Activated T-helper 1 cell treated with anti-CD3 and anti-CD28 coated beads, Interleukin-12 subunit alpha, Interleukin-12 subunit beta, Interleukin-2, Interleukin-4 antibody, amounts not matched to agents 30 ng/mL and 10 ng/mL and 1 ng/mL, durations not matched to agents 14 hours and 24 hours and 36 hours (primary cell): ENCODE measurements at regions of chr13 and their contacts with region 1.

Region 1: DNA sequence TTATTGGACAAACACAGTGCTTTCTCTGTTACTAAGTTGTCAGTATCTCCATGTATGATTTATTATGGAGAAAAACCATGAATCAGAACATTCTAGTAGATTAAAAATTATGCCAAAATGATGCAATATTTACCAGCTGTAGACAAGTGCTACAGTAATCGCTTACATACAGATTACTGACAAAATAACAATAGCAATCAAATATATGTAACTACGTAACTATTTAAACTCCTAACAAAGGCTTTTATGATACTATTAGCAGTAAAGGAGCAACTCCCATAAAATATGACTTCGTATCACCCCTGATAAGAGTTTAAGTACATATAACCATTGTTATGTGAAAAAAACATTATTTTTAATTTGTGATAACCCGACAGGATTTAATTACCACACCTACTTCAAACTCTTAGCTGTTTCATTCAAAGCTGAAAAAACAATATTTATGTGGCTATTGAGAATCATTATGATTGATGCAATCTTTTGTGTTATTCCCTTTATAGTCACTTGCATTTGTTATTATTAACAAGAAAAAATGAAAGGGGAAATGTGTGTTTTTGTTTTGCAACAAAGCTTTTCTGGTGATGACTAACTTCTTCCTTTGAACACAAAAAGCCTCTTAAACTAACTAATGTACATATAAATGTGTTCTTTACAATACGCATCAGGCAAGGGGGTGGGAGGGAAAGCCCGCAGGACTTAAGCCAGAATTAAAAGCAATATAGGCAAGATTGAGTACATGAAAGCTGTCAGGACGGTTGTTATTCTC is 147.4 kb downstream of the ABCC4 start:
- DNase-seq: no peak
- H3K4me3 Mint-ChIP-seq: no peak overlapping the region
- H3K27ac Mint-ChIP-seq: peak overlapping the region; percentile 40
- H3K4me1 Mint-ChIP-seq: peaks cover 8% of the 10 kb centered on the region
- H3K27me3 Mint-ChIP-seq: no peaks in the 10 kb centered on the region

Region 2: GRCh38 chr13:95138876-95139585 is 14.8 kb before region 1 on chr13:
- intact Hi-C with region 1: no loop called
- DNase-seq: no peak
- H3K4me3 Mint-ChIP-seq: no peak overlapping the region
- H3K27ac Mint-ChIP-seq: no peak overlapping the region
- H3K4me1 Mint-ChIP-seq: no peaks in the 10 kb centered on the region
- H3K27me3 Mint-ChIP-seq: no peaks in the 10 kb centered on the region

Region 3: DNA sequence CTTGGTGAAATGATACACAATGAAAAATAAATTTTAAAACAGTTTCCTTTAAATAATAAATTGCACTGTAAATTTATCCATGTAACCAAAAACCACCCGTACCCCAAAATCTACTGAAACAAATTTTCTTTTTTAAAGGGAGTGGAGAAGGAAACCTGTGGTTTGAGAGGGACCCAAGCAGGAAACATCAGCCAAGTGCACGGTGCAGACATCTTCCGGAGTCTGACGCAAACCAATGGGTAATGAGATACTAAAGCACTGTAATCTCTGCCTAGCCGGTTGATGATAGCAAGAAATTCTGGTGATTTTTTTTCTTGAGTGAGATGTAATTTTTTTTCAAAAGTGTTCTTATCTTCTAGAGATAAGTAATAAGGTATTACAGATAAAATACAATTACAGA is 32.0 kb after region 1 on chr13:
- intact Hi-C with region 1: loop called (anchors 2 kb)
- DNase-seq: peak; percentile 48
- H3K4me3 Mint-ChIP-seq: peak overlapping the region; percentile 34
- H3K27ac Mint-ChIP-seq: peak overlapping the region; percentile 37
- H3K4me1 Mint-ChIP-seq: peaks cover 53% of the 10 kb centered on the region
- H3K27me3 Mint-ChIP-seq: no peaks in the 10 kb centered on the region